Right lobe of liver (tissue), 6 donors: ENCODE measurements at regions of chrX and their contacts with region 1.

Region 1: GRCh38 chrX:108224727-108225621 is 133.4 kb downstream of the ATG4A start:
- DNase-seq: no peak
- ATAC-seq: peak; percentile 43 to 62 (median 57)
- H3K4me3 ChIP-seq: no peak overlapping the region
- H3K27ac ChIP-seq: no peak overlapping the region
- H3K4me1 ChIP-seq: no peaks in the 10 kb centered on the region
- H3K27me3 ChIP-seq: no peaks in the 10 kb centered on the region
- CTCF ChIP-seq: peak; percentile 44 to 57 (median 56)
- POLR2A ChIP-seq: no peak

Region 2: GRCh38 chrX:108537005-108537404 is 312.0 kb after region 1 on chrX:
- intact Hi-C with region 1: loop called in 1 of 2 experiments (anchors 10 kb)
- DNase-seq: no peak
- ATAC-seq: peak; percentile 69 to 83 (median 76)
- H3K4me3 ChIP-seq: no peak overlapping the region
- H3K27ac ChIP-seq: no peak overlapping the region
- H3K4me1 ChIP-seq: no peaks in the 10 kb centered on the region
- H3K27me3 ChIP-seq: peaks cover 0 to 6% of the 10 kb centered on the region in 2 donors
- CTCF ChIP-seq: peak; percentile 74 to 85 (median 77)
- POLR2A ChIP-seq: no peak